Activated CD8-positive, alpha-beta T cell treated with anti-CD3 and anti-CD28 coated beads, Interleukin-2, amount 10 ng/mL, durations not matched to agents 7 days and 5 days (primary cell): ENCODE measurements at regions of chr3 and their contacts with region 1.

Region 1: DNA sequence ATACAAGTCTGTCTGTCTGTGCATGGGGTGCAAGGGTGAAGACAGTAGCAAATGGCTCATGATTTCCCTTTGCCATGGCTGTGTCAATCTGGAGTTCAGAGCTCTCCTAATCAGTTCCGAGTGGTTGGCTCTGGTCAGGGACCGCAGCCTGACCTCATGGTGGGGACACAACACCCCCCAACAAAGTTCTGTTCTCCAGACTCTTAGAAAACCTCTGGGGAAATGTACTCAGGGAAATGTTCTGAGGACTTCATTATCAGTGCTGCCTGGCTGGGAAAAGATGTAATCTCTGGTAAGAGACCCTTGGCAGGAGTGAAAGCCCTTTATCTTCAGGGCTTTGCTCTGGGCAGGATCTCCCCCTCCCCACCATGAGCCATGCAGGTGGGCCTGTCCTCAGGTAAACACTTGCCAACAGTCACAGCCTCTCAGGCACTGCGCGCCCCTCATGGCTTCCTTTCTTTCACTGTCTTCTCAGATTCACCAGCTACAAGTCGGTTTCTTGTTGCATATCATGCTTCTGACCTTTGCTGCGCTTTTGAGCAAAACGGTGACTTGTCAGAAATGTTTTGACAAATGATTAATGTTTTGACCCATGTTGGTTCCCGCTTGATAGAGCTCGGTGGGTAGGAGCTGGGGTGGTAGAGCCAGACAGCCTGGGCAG is 95.5 kb downstream of the ST6GAL1 start:
- DNase-seq: peak; percentile 52
- ATAC-seq: peak; percentile 29
- H3K4me3 Mint-ChIP-seq: peak overlapping the region; percentile 79
- H3K27ac Mint-ChIP-seq: peak overlapping the region; percentile 90
- H3K4me1 Mint-ChIP-seq: peaks cover 61% of the 10 kb centered on the region
- H3K27me3 Mint-ChIP-seq: no peaks in the 10 kb centered on the region

Region 2: GRCh38 chr3:186930641-186931531 is 94.9 kb before region 1 on chr3:
- CTCF ChIA-PET with region 1: interaction called, 9 read pairs
- POLR2A ChIA-PET with region 1: interaction called, 25 read pairs
- DNase-seq: peak; percentile 78
- ATAC-seq: peak; percentile 80
- H3K4me3 Mint-ChIP-seq: peak overlapping the region; percentile 99
- H3K27ac Mint-ChIP-seq: peak overlapping the region; percentile 87
- H3K4me1 Mint-ChIP-seq: peaks cover 28% of the 10 kb centered on the region
- H3K27me3 Mint-ChIP-seq: no peaks in the 10 kb centered on the region

Region 3: GRCh38 chr3:187005827-187006481 is 19.8 kb before region 1 on chr3:
- CTCF ChIA-PET with region 1: interaction called, 14 read pairs
- POLR2A ChIA-PET with region 1: interaction called, 26 read pairs
- DNase-seq: peak; percentile 61
- ATAC-seq: peak; percentile 69
- H3K4me3 Mint-ChIP-seq: peak overlapping the region; percentile 30
- H3K27ac Mint-ChIP-seq: peak overlapping the region; percentile 88
- H3K4me1 Mint-ChIP-seq: peaks cover 69% of the 10 kb centered on the region
- H3K27me3 Mint-ChIP-seq: no peaks in the 10 kb centered on the region

Region 4: DNA sequence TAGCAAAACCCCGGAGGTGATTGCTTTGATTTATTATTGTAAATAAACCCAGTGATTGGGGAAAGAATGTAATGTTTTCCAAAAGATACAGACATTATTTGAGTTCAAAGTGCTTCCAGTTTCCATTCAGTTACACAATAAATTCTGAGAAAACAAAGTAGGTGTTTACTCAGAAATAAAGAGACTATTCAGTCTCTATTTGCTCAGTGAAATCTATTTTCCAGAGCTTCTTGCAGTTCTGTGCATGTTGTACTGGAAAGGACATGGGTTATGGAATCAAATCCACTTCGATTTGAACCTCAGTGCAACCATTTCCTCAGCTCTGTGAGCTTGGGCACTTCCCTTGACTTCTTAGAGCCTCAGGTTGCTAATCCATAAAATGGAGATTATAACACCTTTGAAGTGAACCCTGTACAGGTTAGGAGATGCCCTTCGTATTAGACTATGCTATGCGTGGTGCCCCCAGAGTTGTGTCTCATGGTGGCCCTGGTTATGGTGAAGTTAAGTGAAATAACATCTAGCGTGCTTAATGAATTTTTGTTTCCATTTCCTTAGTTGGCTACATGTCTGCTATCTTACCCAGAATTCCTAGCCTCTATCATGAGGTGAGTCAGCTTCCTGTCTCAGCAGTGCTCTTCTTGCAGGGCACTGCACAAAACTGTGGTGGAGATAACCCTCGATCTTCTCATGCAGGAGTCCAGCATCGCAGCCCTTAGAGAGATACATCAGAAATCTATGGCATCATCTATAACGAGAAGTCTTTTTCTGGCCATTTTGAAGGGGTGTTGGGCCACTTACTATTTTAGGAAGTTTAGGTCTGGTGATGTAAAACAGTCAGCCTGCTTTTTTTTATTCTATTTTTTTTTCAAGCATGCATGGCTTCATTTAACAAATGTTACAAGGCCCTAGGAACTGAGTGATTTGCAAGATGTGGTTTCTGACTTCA is 15.8 kb after region 1 on chr3:
- CTCF ChIA-PET with region 1: interaction called, 15 read pairs
- POLR2A ChIA-PET with region 1: interaction called, 69 read pairs
- DNase-seq: peak; percentile 79
- ATAC-seq: peak; percentile 94
- H3K4me3 Mint-ChIP-seq: peak overlapping the region; percentile 65
- H3K27ac Mint-ChIP-seq: peak overlapping the region; percentile 95
- H3K4me1 Mint-ChIP-seq: peaks cover 74% of the 10 kb centered on the region
- H3K27me3 Mint-ChIP-seq: no peaks in the 10 kb centered on the region

Region 5: GRCh38 chr3:187139126-187139894 is 113.5 kb after region 1 on chr3 and contains the start of gene RPL39L:
- CTCF ChIA-PET with region 1: interaction called, 30 read pairs
- POLR2A ChIA-PET with region 1: interaction called, 7 read pairs
- DNase-seq: peak; percentile 96
- ATAC-seq: peak; percentile 98
- H3K4me3 Mint-ChIP-seq: peak within 1 kb of the TSS; percentile 91
- H3K27ac Mint-ChIP-seq: peak within 1 kb of the TSS; percentile 98
- H3K4me1 Mint-ChIP-seq: peaks cover 24% of the 10 kb centered on the region
- H3K27me3 Mint-ChIP-seq: no peaks in the 10 kb centered on the region
- total RNA-seq, gene RPL39L: 21.1 to 23.5 TPM

Region 6: GRCh38 chr3:187291001-187291511 is 265.3 kb after region 1 on chr3:
- CTCF ChIA-PET with region 1: no interaction called
- POLR2A ChIA-PET with region 1: no interaction called
- DNase-seq: no peak
- ATAC-seq: no peak
- H3K4me3 Mint-ChIP-seq: no peak overlapping the region
- H3K27ac Mint-ChIP-seq: no peak overlapping the region
- H3K4me1 Mint-ChIP-seq: no peaks in the 10 kb centered on the region
- H3K27me3 Mint-ChIP-seq: peaks cover 45% of the 10 kb centered on the region